Endothelial cell of umbilical vein (primary cell): ENCODE measurements at regions of chr12 and their contacts with region 1.

Region 1: DNA sequence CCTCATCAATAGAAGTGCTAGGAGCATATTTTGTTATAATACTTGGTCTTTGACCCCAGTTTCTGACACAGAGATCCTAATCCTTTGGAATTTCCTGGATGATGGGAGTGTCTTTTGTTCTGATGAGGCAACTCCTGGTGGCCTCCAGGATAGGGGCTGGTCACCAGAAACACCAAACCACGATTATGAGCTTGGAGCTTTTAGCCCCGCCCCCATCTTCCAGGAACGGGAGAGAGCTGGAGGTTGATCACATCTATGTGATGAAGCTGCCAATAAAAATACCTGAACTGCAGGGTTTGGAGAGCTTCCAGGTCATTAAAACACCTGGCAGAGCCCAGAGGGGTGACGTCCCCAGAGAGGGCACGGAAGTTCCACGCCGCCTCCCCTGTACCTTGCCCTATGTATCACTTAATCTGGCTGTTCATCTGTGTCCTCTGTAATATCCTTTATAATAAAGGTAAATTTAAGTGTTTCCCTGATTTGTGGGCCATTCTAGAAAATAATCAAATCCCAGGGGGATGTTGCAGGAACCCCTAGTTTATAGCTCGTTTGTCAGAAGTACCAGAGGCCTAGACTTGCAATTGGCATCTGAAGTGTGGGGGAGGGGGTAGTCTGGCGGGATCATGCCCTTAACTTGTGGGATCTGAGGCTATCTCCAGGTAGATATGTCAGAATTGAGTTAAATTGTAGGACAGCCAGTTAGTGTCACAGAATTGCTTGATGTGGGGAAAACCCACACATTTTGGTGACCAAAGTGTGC is 21.2 kb downstream of the APPL2 start:
- DNase-seq: peak; percentile 45
- H3K4me3 ChIP-seq: no peak overlapping the region
- H3K27ac ChIP-seq: peak overlapping the region; percentile 62
- H3K4me1 ChIP-seq: peaks cover 13% of the 10 kb centered on the region
- H3K27me3 ChIP-seq: no peaks in the 10 kb centered on the region
- CTCF ChIP-seq: peak in 1 of 2 donors; percentile 3
- POLR2A ChIP-seq: no peak

Region 2: DNA sequence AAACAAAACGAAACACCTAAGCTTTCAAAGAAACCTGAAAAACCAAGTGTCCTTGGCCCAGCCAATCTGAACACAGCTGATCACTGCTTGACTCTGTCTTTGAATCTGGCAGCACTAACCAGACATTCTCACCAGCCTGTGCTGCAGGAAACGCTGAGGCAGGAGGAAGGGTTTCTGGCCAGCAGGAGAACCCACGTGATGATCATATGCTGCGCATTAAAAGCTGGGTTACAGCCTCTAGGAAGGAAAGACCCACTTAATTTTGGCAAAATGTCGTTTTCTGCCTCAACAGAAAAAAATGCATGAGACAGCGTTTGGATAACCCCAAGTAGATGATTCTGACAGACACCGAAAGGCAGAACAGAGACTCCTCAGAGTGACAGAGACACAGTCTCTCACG is 11.4 kb after region 1 on chr12:
- CTCF ChIA-PET with region 1: interaction called, 20 read pairs
- POLR2A ChIA-PET with region 1: no interaction called
- dilution Hi-C with region 1: no loop called
- intact Hi-C with region 1: no loop called
- DNase-seq: peak; percentile 90
- H3K4me3 ChIP-seq: no peak overlapping the region
- H3K27ac ChIP-seq: peak overlapping the region; percentile 25
- H3K4me1 ChIP-seq: peaks cover 39% of the 10 kb centered on the region
- H3K27me3 ChIP-seq: no peaks in the 10 kb centered on the region
- CTCF ChIP-seq: no peak
- POLR2A ChIP-seq: no peak